AG04450 (cell line): ENCODE measurements at regions of chr3 and their contacts with region 1.

Region 1: DNA sequence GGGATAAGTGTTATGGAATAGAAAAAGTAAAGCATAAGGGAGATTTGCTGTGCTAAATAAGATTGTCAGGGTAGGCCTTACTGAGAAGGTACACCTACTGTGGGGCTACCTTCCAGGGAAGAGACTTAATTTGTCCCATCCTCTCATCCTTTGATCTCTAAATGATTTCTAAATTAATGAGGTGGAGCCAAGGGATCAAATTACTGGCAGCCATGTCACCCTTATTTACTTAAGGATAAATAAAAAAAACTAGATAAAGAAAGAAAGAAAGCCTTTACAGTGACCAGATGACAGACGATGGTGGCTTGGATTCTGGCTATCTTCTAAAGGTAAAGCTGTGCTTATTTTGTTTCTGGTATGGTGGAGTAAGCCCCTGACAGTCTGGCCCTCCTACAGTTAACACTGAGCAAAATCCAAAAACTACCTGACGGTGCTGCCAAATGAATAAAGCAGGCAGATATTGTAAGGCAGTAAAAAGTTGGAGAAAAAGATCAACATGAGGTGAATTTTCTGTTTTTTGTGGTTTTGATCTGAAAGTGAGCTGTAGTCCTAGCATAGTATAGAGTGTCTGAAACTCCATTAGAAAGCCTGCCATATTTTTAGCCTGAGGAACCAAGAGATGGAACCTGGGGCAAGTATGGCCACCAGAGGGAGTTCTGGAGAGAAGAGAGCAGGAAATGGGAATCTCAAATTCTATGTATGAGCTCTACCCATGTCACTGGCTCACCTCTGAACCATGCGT is 285.1 kb upstream of the MANF start:
- DNase-seq: peak; percentile 18
- H3K4me3 ChIP-seq: no peak overlapping the region
- H3K27ac ChIP-seq: no peak overlapping the region
- H3K27me3 ChIP-seq: no peaks in the 10 kb centered on the region
- CTCF ChIP-seq: peak; percentile 91

Region 2: DNA sequence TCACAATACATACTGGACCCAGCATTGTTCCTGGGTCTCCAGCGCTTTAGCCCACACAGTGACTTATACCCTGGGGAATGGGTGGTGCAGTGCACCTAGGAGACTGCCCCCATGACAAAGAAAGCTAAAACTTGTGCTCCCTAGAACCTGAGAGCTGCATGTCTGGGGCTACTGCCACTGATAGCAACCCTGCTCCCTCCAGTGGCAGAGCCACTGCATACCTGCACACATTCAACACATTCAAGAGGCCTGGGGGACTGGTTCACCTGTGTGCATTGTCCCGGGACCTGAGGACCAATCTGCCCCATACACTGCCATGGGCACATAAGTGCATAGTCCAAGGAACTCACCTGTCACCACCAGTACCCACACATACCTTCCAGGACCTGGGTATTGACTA is 17.6 kb before region 1 on chr3:
- CTCF ChIA-PET with region 1: interaction called, 12 read pairs
- POLR2A ChIA-PET with region 1: no interaction called
- DNase-seq: no peak
- H3K4me3 ChIP-seq: no peak overlapping the region
- H3K27ac ChIP-seq: no peak overlapping the region
- H3K27me3 ChIP-seq: no peaks in the 10 kb centered on the region
- CTCF ChIP-seq: no peak

Region 3: DNA sequence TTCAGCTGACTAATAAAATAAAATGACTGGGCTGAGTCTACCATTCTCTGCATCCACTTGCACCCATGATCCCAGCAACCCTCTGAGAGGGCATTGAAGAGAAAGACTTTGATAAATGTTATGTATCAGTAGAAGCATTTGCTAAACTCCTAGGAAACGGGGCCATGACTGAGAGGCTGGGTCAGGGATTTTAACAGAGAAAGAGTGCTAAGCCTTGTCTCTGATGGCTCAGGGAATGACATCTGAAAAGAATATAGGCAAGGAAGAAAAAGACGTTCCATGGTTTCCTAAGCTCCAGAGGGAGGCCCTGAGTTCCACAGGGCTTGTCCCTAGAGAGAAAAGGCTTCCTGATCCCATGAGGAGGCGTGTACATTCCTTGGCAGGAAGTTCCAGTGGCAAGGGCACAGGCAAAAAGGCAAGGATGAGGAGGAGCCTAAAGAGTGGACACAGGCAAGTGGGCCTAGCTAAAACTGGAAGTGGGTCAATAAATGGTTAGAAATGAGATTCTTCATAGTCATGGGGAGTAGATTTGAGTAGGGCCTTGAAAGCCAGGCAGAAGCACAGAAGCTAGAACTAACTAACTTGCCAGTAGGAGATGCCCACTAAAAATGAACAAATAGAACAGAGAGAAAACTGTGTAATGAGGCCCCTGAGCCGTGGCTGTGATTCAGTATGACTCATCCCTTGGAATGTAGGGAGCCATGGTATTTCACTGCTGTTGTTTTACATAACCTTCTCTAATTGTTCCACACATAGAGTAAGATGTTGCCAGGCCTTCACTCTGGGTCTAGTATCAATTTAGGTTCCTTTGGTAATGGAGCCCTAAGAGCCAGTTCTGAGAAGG is 240.3 kb after region 1 on chr3:
- CTCF ChIA-PET with region 1: interaction called, 14 read pairs
- POLR2A ChIA-PET with region 1: no interaction called
- DNase-seq: peak; percentile 78
- H3K4me3 ChIP-seq: no peak overlapping the region
- H3K27ac ChIP-seq: peak overlapping the region; percentile 97
- H3K27me3 ChIP-seq: no peaks in the 10 kb centered on the region
- CTCF ChIP-seq: no peak

Region 4: GRCh38 chr3:51371943-51372557 is 272.1 kb after region 1 on chr3:
- CTCF ChIA-PET with region 1: interaction called, 205 read pairs
- POLR2A ChIA-PET with region 1: no interaction called
- DNase-seq: peak; percentile 43
- H3K4me3 ChIP-seq: no peak overlapping the region
- H3K27ac ChIP-seq: no peak overlapping the region
- H3K27me3 ChIP-seq: peaks cover 5% of the 10 kb centered on the region
- CTCF ChIP-seq: peak; percentile 83